PC-9 (cell line): ENCODE measurements at regions of chr10 and their contacts with region 1.

Region 1: DNA sequence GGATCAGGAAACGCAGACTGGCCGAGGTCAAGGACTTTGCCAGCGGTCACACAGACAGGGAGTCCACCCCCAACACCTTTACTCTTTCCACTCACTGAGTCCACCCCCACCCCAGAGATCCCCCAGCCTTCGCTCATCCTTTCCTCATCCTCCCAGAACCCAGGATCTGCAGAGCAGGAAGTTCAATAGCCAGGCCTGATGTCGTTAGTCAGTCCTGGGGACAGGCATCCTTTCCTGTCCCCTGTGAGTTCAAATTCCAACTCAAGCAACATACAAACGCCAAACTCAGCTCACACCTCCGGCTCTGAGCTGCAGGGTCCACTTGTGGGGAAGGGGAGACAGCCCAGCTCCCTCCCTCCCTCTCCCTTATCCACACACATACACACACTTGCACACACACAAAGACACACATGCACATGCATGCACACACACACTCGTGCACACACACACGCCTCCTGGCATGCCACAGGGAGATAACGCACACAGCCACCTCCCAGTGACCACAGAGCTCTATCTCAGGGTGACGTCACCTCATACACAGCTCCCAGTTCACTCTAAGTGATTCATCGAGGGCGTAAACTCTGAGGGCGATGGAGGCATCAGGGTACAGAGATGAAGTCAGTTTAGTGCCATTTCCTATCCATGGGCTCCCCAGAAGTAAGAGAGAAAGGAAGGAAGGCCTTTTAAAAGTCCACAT is 23.9 kb downstream of the CALML3 start:
- DNase-seq: peak; percentile 78 to 89
- H3K4me3 ChIP-seq: peak overlapping the region; percentile 26; the same call in 1 of the 2 replicates
- H3K27ac ChIP-seq: peak overlapping the region; percentile 100
- H3K4me1 ChIP-seq: peaks cover 98% of the 10 kb centered on the region
- H3K27me3 ChIP-seq: no peaks in the 10 kb centered on the region
- CTCF ChIP-seq: no peak

Region 2: DNA sequence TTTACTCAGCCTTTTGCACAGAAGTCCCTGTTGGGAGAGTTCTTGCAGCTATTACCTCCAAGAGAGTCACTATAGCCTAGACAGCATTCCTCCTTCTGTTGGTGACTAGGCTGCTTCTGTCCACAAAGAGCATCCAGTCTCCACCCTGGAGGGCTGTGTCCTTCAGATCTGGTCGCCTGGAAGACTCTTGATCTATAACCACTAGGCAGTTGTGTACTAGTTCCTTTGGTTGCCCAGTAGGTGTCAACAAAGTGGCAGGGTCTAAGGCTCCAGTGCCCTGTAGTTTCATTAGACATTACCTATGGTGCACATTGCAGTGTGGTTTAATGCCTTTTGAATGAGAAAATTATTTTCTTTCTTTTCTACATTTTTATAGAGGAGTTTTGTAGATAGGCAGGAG is 533.7 kb before region 1 on chr10:
- CTCF ChIA-PET with region 1: no interaction called
- POLR2A ChIA-PET with region 1: no interaction called
- intact Hi-C with region 1: no loop called
- DNase-seq: peak in 1 of 2 experiments; percentile 38
- H3K4me3 ChIP-seq: peak overlapping the region; percentile 49
- H3K27ac ChIP-seq: peak overlapping the region; percentile 100
- H3K4me1 ChIP-seq: peaks cover 75% of the 10 kb centered on the region
- H3K27me3 ChIP-seq: no peaks in the 10 kb centered on the region
- CTCF ChIP-seq: peak; percentile 21; the same call in 1 of the 2 replicates

Region 3: DNA sequence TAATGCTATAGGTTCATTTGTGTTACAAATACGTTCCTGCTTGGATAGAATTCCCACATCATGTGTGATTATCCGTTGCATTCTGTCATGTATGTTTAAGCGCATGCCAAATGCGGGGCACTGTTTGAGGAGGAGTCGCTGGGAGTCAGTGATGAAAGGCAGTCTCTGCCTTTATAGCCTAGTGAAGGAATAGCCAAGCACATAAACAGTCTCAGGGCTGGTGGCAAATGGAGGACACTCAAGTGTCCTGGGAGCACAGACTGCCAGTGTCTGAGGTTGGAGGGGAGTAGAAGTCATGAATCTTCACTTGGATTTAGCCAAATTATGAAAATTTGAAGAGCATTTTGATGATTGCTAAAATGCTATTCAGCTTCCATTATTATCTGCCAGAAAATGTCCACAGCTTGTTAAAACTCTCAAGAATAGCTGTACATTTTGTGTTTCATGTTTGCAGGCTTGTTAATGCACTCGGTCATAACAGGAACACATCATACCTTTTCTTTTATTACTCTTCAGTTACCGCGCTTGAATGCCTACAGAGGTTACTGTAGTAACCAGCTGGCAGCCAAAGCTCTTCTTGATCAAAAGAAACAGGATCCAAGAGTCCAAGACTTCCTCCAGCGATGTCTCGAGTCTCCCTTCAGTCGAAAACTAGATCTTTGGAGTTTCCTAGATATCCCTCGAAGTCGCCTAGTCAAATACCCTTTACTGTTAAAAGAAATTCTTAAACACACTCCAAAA is 94.8 kb before region 1 on chr10:
- CTCF ChIA-PET with region 1: no interaction called
- POLR2A ChIA-PET with region 1: no interaction called
- intact Hi-C with region 1: no loop called
- DNase-seq: no peak
- H3K4me3 ChIP-seq: no peak overlapping the region
- H3K27ac ChIP-seq: 0 out of 2 replicates have a peak overlapping the region, but pooled peaks have one; percentile 19
- H3K4me1 ChIP-seq: peaks cover 20% of the 10 kb centered on the region
- H3K27me3 ChIP-seq: no peaks in the 10 kb centered on the region
- CTCF ChIP-seq: no peak

Region 4: GRCh38 chr10:5466418-5467154 is 82.1 kb before region 1 on chr10:
- CTCF ChIA-PET with region 1: interaction called, 6 read pairs
- POLR2A ChIA-PET with region 1: interaction called, 12 read pairs
- intact Hi-C with region 1: loop called (anchors 1 kb)
- DNase-seq: peak; percentile 86 to 87
- H3K4me3 ChIP-seq: peak overlapping the region; percentile 42; the same call in 1 of the 2 replicates
- H3K27ac ChIP-seq: peak overlapping the region; percentile 91
- H3K4me1 ChIP-seq: peaks cover 30% of the 10 kb centered on the region
- H3K27me3 ChIP-seq: no peaks in the 10 kb centered on the region
- CTCF ChIP-seq: no peak

Region 5: GRCh38 chr10:5479481-5480161 is 69.1 kb before region 1 on chr10:
- CTCF ChIA-PET with region 1: no interaction called
- POLR2A ChIA-PET with region 1: no interaction called
- intact Hi-C with region 1: no loop called
- DNase-seq: no peak
- H3K4me3 ChIP-seq: no peak overlapping the region
- H3K27ac ChIP-seq: no peak overlapping the region
- H3K4me1 ChIP-seq: peaks cover 5% of the 10 kb centered on the region; the same call in 1 of the 2 replicates
- H3K27me3 ChIP-seq: no peaks in the 10 kb centered on the region
- CTCF ChIP-seq: no peak

Region 6: DNA sequence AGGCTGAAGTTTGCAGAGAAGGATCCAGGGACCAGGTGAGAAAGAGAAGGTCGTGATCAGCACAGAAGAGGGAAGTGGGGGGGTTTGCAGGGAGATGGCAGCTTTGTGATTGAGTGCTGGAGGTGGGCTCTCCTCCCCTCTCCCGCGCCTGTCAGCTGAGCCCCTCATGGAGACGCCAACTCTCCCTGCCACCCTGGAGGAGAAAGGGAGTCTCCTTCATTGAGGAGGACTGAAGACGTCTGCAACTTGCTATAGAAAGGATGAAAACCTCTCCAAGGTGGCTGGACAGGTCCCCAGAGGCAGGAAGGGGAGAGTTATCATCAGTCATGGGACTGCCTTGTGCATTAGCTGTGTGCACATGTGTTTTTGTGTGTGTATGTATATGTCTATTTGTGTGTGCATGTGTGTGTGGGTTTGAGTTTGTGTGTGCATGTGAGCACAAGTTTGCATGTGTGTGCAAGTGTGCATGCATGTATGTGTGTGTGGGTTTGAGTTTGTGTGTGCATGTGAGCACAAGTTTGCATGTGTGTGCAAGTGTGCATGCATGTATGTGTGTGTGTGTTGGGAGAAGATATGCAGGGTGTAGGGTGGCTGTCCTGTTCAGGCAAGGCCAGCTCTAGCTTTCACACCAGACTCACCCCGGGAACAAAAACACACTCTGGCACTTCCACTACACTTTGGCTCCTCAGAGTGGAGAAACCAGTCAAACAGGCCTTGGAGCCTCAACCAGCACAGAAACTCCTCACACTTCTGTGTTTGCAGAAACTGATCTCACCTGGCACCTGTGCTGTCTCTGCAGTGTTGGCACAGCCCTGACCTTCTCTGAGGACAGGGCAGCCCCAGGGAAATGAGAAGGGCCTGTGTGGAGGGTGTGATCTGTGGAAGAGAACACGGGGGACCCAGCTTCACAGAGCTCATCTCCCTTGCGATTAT is 45.5 kb before region 1 on chr10:
- CTCF ChIA-PET with region 1: interaction called, 3 read pairs
- POLR2A ChIA-PET with region 1: interaction called, 6 read pairs
- intact Hi-C with region 1: loop called (anchors 1 kb)
- DNase-seq: peak; percentile 75 to 81
- H3K4me3 ChIP-seq: no peak overlapping the region
- H3K27ac ChIP-seq: no peak overlapping the region
- H3K4me1 ChIP-seq: peaks cover 63% of the 10 kb centered on the region
- H3K27me3 ChIP-seq: no peaks in the 10 kb centered on the region
- CTCF ChIP-seq: no peak

Region 7: DNA sequence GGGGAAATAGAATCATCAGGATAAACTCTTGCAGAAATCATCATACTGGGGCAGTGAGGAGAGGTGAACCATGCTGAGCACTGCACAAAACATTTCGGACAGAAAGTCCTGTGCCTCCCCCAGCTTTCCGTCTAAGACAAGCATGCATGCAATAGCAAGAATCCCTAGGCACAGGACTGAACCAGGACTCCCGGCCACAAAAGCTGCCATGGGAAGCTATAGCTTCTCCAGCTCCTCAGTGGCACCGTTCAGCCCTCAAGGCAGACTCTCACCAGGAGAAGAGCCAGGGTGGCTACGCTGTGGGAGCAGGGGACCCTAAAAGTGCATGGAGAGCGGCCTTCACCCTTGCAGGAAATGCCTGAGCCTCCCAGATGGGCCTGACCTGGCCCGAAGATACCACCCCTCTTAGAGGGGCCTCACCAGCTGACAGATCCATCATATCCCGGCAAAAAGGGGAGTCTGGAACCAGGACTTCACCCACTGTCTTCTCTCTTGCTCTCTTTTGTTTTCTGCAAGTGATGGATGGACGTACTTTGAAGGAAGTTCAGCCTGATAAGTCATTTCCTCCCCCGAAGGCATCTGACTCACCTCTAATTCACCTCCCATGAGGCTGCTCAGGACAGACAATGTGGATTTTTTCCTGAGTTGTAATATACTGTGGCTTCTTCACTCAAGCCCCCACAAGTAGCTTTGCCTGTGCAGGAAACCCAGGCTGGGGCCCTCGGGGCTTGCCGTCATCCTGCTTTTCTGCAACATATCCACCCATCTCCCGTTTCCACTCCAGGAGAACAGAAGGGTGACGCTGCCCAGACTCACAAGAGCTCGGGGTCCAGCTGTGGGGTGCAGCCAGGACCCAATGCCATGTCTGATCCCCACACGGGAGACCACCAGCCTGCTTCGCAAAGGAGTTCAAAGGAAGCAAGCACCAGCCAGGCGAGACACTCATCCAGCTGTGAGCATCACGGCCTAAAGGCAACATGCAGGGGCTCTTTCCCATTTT is 47.2 kb after region 1 on chr10:
- CTCF ChIA-PET with region 1: no interaction called
- POLR2A ChIA-PET with region 1: interaction called, 5 read pairs
- intact Hi-C with region 1: loop called (anchors 1 kb)
- DNase-seq: peak; percentile 69 to 93
- H3K4me3 ChIP-seq: peak overlapping the region; percentile 64
- H3K27ac ChIP-seq: peak overlapping the region; percentile 87
- H3K4me1 ChIP-seq: peaks cover 67% of the 10 kb centered on the region
- H3K27me3 ChIP-seq: no peaks in the 10 kb centered on the region
- CTCF ChIP-seq: no peak

Region 8: DNA sequence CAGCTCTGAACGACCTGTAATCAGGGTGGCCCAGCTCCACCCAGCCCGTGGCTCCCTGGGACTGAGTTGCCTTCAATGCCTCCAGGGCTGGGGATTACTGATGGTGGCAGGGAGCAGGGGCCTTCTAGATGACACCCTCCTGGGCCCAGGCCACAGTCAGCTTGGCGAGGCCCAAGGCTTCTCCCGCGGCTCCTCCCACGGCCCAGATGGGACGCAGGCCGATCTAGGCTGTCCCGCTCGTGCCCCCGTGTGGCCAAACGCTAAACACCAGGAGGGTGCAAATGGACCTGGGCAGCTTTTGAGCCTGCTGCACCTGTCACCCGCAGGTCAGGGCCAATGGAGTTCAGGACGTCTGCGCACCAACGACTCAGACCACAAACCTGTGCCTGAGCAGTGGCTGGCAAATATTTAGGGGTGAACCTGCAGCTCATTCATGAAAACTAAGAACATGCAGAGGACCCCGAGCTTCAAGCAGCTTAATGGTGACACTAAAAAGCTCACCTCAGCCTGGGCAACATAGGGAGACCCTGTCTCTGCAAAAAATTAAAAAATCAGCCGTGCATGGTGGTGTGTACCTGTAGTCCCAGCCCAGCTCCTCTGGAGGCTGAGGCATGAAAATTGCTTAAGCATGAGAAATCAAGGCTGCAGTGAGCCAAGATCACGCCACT is 74.5 kb after region 1 on chr10:
- CTCF ChIA-PET with region 1: interaction called, 4 read pairs
- POLR2A ChIA-PET with region 1: interaction called, 4 read pairs
- intact Hi-C with region 1: loop called (anchors 1 kb)
- DNase-seq: peak; percentile 83 to 93
- H3K4me3 ChIP-seq: no peak overlapping the region
- H3K27ac ChIP-seq: peak overlapping the region; percentile 77
- H3K4me1 ChIP-seq: peaks cover 20% of the 10 kb centered on the region
- H3K27me3 ChIP-seq: no peaks in the 10 kb centered on the region
- CTCF ChIP-seq: peak; percentile 84